ENCODE measurements at regions of chr5 and their contacts with region 1.

Region 1: DNA sequence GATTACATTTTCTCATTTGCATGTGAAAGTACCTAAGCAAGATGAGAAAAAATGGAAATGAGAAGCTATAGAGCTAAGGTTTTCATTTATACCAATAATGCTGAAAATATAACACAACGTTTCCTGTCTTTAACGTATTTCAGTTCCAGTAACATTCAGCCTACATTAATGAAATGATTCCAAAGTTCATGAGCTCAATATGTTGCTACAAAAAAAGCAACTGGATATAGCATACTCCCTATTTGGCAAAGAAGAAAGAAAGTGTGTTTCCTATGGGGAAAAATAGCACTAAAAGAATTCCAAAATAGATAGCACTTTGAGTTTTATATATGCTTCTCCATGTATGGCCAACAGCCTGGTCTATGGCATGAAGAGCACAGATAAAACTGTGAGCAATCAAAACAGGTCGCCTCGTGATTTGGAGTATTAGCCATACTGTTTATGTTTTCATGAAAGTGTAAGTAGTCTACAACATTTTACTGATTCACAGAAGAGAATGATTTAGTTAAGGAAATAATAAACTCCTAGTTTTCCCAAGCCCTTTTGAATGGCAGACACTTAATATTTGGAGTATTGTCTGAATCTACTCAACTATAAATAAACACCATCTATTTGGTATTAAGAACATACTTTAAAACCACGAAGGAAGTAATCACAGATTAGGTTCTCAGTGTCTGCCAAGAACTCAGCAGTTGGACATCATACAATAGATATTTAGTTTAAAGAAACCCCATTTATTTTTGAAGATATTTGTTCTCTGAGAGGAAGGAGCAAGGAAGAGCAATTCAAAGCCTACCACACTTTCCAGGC is 258.7 kb upstream of the RASA1 start:
- DNase-seq: no peak
- H3K4me3 ChIP-seq: no peak overlapping the region
- H3K27ac ChIP-seq: no peak overlapping the region
- H3K4me1 ChIP-seq: no peaks in the 10 kb centered on the region
- H3K27me3 ChIP-seq: no peaks in the 10 kb centered on the region
- CTCF ChIP-seq: no peak
- POLR2A ChIP-seq: no peak

Region 2: DNA sequence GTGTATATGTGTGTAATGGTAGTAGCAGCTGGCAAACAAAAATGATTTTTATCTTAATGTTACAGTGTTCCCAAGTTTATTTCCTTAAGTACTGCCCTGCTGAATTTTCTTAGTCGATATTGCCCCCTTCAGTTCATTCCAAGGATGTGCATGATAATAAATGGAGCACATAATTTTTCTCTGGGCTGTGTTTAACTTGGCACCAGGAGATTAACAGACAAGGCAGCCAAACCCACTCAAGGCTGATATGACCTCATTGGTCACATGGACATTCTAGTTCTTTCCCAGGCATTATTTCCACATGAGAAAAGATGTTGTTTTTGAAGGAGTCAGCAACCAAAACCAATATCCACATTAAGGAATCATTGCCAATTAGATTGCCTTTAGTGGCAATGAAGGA is 329.4 kb before region 1 on chr5:
- CTCF ChIA-PET with region 1: no interaction called
- POLR2A ChIA-PET with region 1: no interaction called
- dilution Hi-C with region 1: no loop called
- intact Hi-C with region 1: loop called (anchors 5 kb)
- DNase-seq: peak; percentile 87
- H3K4me3 ChIP-seq: no peak overlapping the region
- H3K27ac ChIP-seq: no peak overlapping the region
- H3K4me1 ChIP-seq: no peaks in the 10 kb centered on the region
- H3K27me3 ChIP-seq: no peaks in the 10 kb centered on the region
- CTCF ChIP-seq: peak; percentile 30 to 35
- POLR2A ChIP-seq: no peak

Region 3: DNA sequence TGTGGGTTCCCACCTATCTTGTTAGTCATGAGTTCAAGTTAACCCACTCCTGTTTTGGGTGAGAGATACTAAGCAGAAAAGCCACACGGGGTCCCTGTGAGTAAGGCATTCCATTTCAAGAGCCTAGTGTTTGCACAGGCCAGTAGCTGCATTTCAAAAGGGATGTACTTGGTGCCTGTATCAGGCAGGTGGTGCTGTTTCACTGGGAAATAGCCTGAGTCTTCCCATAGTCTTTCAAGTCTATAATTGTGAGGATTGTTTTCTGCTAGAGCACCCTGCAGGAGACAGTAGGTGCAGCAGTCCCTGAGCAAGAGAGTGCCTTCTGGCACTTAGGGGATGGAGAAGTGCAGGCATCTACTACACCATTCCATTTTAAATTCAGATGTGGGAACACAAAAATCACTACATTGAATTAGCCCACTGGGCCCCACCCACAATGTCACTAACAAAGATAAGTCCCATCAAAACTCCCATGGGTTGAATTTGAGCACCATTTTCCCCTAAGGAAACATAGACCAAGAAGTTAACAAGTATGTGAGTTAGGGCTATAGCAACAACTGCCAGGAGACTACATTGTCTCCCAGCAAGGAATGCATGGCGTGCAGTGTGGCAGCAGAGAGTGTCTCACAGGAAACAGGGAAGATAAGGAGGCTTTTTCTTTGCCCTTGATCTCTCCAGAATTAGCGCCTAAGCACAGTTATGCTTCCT is 128.0 kb before region 1 on chr5:
- CTCF ChIA-PET with region 1: interaction called, 79 read pairs
- POLR2A ChIA-PET with region 1: no interaction called
- dilution Hi-C with region 1: no loop called
- intact Hi-C with region 1: loop called (anchors 1 kb)
- DNase-seq: peak; percentile 69
- H3K4me3 ChIP-seq: no peak overlapping the region
- H3K27ac ChIP-seq: no peak overlapping the region
- H3K4me1 ChIP-seq: no peaks in the 10 kb centered on the region
- H3K27me3 ChIP-seq: no peaks in the 10 kb centered on the region
- CTCF ChIP-seq: peak; percentile 61 to 66
- POLR2A ChIP-seq: no peak

Region 4: GRCh38 chr5:86986837-86987236 is 22.1 kb before region 1 on chr5:
- CTCF ChIA-PET with region 1: interaction called, 10 read pairs
- POLR2A ChIA-PET with region 1: no interaction called
- dilution Hi-C with region 1: no loop called
- intact Hi-C with region 1: no loop called
- DNase-seq: no peak
- H3K4me3 ChIP-seq: no peak overlapping the region
- H3K27ac ChIP-seq: no peak overlapping the region
- H3K4me1 ChIP-seq: no peaks in the 10 kb centered on the region
- H3K27me3 ChIP-seq: peaks cover 0 to 2% of the 10 kb centered on the region in 2 experiments
- CTCF ChIP-seq: no peak
- POLR2A ChIP-seq: no peak

Region 5: DNA sequence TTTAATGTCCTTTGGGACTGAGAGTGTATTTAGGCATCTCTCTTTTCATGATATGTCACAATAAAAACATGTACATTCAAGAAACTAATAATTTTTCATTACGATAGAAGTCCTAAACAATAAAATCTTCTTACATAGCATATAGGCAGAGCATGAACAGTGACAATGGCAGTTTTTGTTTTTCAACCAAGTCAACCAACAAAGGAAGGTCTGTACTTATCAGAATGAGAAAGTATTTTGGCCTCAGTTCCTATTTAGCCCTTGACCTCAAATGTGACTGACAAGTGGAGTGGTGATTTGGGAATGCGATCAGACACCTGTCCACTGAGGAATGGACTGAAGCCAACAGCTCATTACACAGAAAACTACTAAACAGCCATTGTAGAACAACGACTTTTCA is 1040.2 kb after region 1 on chr5:
- CTCF ChIA-PET with region 1: no interaction called
- POLR2A ChIA-PET with region 1: no interaction called
- dilution Hi-C with region 1: no loop called
- intact Hi-C with region 1: no loop called
- DNase-seq: no peak
- H3K4me3 ChIP-seq: no peak overlapping the region
- H3K27ac ChIP-seq: no peak overlapping the region
- H3K4me1 ChIP-seq: no peaks in the 10 kb centered on the region
- H3K27me3 ChIP-seq: no peaks in the 10 kb centered on the region
- CTCF ChIP-seq: no peak
- POLR2A ChIP-seq: no peak